CD4-positive, alpha-beta memory T cell (primary cell): ENCODE measurements at regions of chr2 and their contacts with region 1.

Region 1: GRCh38 chr2:218568190-218569037 is at the starts of genes CNOT9 and USP37:
- DNase-seq: peak; percentile 99 to 100 (median 100)
- H3K4me3 ChIP-seq: peak within 1 kb of the TSS; percentile 67 to 84
- H3K4me3 Mint-ChIP-seq: peak within 1 kb of the TSS; percentile 90 to 99 (median 97)
- H3K27ac ChIP-seq: peak within 1 kb of the TSS; percentile 99
- H3K27ac Mint-ChIP-seq: peak within 1 kb of the TSS; percentile 96 to 100 (median 100)
- H3K4me1 ChIP-seq: peaks cover 43% of the 10 kb centered on the region
- H3K4me1 Mint-ChIP-seq: peaks cover 48 to 78% (median 57%) of the 10 kb centered on the region in 4 donors
- H3K27me3 ChIP-seq: no peaks in the 10 kb centered on the region
- H3K27me3 Mint-ChIP-seq: no peaks in the 10 kb centered on the region
- total RNA-seq, gene CNOT9: 53.9 to 58.0 TPM
- total RNA-seq, gene USP37: 28.2 to 29.1 TPM

Region 2: GRCh38 chr2:218082586-218083351 is 485.6 kb before region 1 on chr2:
- CTCF ChIA-PET with region 1: no interaction called
- POLR2A ChIA-PET with region 1: no interaction called
- intact Hi-C with region 1: no loop called
- DNase-seq: no peak
- H3K4me3 ChIP-seq: no peak overlapping the region
- H3K4me3 Mint-ChIP-seq: no peak overlapping the region
- H3K27ac ChIP-seq: no peak overlapping the region
- H3K27ac Mint-ChIP-seq: no peak overlapping the region
- H3K4me1 ChIP-seq: no peaks in the 10 kb centered on the region
- H3K4me1 Mint-ChIP-seq: no peaks in the 10 kb centered on the region
- H3K27me3 ChIP-seq: no peaks in the 10 kb centered on the region
- H3K27me3 Mint-ChIP-seq: peaks cover 7 to 8% of the 10 kb centered on the region in 2 donors

Region 3: DNA sequence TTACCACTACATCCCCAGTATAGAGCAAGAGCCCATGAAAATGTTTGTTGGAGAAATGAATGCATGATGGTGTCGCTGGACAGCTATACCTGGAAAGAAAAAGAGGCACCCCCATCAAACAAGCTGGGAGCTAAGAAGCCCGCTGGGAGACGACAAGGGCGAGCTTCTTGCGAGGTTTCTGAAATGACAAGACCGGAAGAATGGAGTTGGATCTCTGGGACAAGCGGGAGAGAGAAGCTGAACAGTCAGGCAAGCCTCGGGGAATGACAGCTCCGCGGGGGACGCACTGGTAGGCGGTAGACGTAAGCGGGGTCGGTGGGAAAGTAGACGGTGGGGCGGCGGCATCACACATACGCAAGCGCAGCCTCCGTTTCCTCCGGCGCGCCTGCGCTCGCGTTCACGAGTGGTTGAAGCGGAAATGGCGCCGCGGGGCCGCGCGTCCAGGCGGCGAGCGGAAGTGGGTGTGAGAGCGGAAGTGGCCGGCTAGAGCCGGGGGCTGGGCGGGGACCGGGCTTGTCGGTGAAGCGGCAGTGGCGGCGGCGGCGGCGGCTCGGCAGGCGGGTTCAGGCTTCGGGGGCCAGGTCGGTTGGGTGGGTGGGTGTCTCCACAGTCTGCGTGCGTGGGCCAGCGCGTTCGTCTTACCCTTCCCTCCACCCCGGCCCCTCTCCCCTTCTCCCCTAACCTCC is 351.6 kb before region 1 on chr2 and contains the start of gene ARPC2:
- CTCF ChIA-PET with region 1: no interaction called
- POLR2A ChIA-PET with region 1: no interaction called
- intact Hi-C with region 1: loop called (anchors 2 kb)
- DNase-seq: peak; percentile 92 to 97 (median 96)
- H3K4me3 ChIP-seq: peak within 1 kb of the TSS; percentile 85 to 97
- H3K4me3 Mint-ChIP-seq: peak within 1 kb of the TSS; percentile 89 to 98 (median 96)
- H3K27ac ChIP-seq: peak within 1 kb of the TSS; percentile 93
- H3K27ac Mint-ChIP-seq: peak within 1 kb of the TSS; percentile 93 to 99 (median 97)
- H3K4me1 ChIP-seq: peaks cover 39% of the 10 kb centered on the region
- H3K4me1 Mint-ChIP-seq: peaks cover 28 to 52% (median 38%) of the 10 kb centered on the region in 4 donors
- H3K27me3 ChIP-seq: no peaks in the 10 kb centered on the region
- H3K27me3 Mint-ChIP-seq: no peaks in the 10 kb centered on the region
- total RNA-seq, gene ARPC2: 412 to 414 TPM

Region 4: GRCh38 chr2:218286570-218287459 is 281.6 kb before region 1 on chr2:
- CTCF ChIA-PET with region 1: no interaction called
- POLR2A ChIA-PET with region 1: no interaction called
- intact Hi-C with region 1: loop called (anchors 1 kb)
- DNase-seq: peak; percentile 84 to 97 (median 87)
- H3K4me3 ChIP-seq: peak overlapping the region; percentile 53 to 86
- H3K4me3 Mint-ChIP-seq: peak overlapping the region; percentile 90 to 97 (median 91)
- H3K27ac ChIP-seq: peak overlapping the region; percentile 94
- H3K27ac Mint-ChIP-seq: peak overlapping the region; percentile 98 to 100 (median 99)
- H3K4me1 ChIP-seq: peaks cover 92% of the 10 kb centered on the region
- H3K4me1 Mint-ChIP-seq: peaks cover 55 to 95% (median 73%) of the 10 kb centered on the region in 4 donors
- H3K27me3 ChIP-seq: no peaks in the 10 kb centered on the region
- H3K27me3 Mint-ChIP-seq: no peaks in the 10 kb centered on the region

Region 5: GRCh38 chr2:218648088-218648786 is 79.8 kb after region 1 on chr2:
- CTCF ChIA-PET with region 1: no interaction called
- POLR2A ChIA-PET with region 1: no interaction called
- intact Hi-C with region 1: loop called (anchors 2 kb)
- DNase-seq: peak in 4 of 5 donors; percentile 42 to 52 (median 48)
- H3K4me3 ChIP-seq: no peak overlapping the region
- H3K4me3 Mint-ChIP-seq: no peak overlapping the region
- H3K27ac ChIP-seq: no peak overlapping the region
- H3K27ac Mint-ChIP-seq: peak overlapping the region in 2 of 7 donors; percentile 54 to 67
- H3K4me1 ChIP-seq: peaks cover 6% of the 10 kb centered on the region
- H3K4me1 Mint-ChIP-seq: peaks cover 6 to 13% (median 11%) of the 10 kb centered on the region in 4 donors
- H3K27me3 ChIP-seq: no peaks in the 10 kb centered on the region
- H3K27me3 Mint-ChIP-seq: no peaks in the 10 kb centered on the region

Region 6: DNA sequence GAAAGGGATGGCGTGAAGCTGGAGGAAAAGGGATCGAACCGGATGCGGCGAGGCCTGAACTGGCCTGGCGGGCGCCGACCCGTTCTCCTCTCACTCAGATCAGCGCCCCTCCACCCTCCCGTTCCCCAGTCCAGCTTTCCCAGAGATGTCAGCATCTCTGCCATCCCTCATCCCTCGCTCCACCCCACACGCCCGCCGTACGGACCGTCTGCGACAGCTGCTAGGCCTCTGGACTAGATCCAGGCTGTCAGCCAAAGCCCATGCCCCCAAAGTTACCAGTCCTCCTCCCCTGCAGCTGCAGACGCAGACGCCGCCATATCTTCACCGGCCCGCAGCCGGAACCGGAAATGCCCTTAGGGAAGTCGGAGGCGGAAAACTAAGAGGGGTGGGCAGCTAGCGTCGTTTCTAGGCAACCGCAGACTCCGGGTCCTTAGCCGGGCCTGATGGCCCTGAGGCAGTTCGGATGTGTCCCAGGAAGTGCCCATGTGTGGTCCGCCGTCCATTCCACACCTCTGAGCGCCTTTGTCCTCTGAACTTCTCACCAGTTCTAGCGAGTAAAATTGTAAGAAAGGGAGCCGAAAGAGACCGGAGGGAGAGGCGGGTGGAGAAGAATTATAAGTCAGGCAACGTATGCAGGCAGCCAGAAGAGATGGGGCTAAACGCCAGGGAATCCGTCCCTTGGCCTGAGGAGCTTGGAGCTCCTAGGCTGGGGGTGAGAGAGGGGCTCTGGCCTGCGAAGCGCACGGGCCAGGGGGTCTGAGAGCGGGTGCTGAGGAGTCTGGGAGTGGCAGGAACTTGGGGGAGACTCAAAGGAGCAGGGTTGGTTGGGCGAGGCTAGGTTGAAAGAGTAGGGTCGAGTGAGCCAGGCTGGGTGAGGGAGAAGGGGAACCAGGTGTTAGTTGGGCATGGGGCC is 103.5 kb after region 1 on chr2 and contains the starts of genes RNF25 and STK36:
- CTCF ChIA-PET with region 1: interaction called, 3 read pairs
- POLR2A ChIA-PET with region 1: interaction called, 4 read pairs
- intact Hi-C with region 1: loop called (anchors 5 kb)
- DNase-seq: peak; percentile 78 to 88 (median 81)
- H3K4me3 ChIP-seq: peak within 1 kb of the TSS; percentile 77 to 97
- H3K4me3 Mint-ChIP-seq: peak within 1 kb of the TSS; percentile 95 to 98 (median 96)
- H3K27ac ChIP-seq: peak within 1 kb of the TSS; percentile 81
- H3K27ac Mint-ChIP-seq: peak within 1 kb of the TSS; percentile 89 to 98 (median 98)
- H3K4me1 ChIP-seq: peaks cover 18% of the 10 kb centered on the region
- H3K4me1 Mint-ChIP-seq: peaks cover 13 to 26% (median 19%) of the 10 kb centered on the region in 4 donors
- H3K27me3 ChIP-seq: no peaks in the 10 kb centered on the region
- H3K27me3 Mint-ChIP-seq: no peaks in the 10 kb centered on the region
- total RNA-seq, gene RNF25: 28.6 to 32.9 TPM
- total RNA-seq, gene STK36: 25.8 to 27.3 TPM

Region 7: GRCh38 chr2:218710687-218711549 is 142.5 kb after region 1 on chr2 and contains the start of gene TTLL4:
- CTCF ChIA-PET with region 1: interaction called, 3 read pairs
- POLR2A ChIA-PET with region 1: no interaction called
- intact Hi-C with region 1: loop called (anchors 1 kb)
- DNase-seq: peak; percentile 98 to 99 (median 99)
- H3K4me3 ChIP-seq: peak within 1 kb of the TSS; percentile 55 to 78
- H3K4me3 Mint-ChIP-seq: peak within 1 kb of the TSS; percentile 88 to 98 (median 95)
- H3K27ac ChIP-seq: peak within 1 kb of the TSS; percentile 81
- H3K27ac Mint-ChIP-seq: peak within 1 kb of the TSS; percentile 79 to 96 (median 93)
- H3K4me1 ChIP-seq: peaks cover 16% of the 10 kb centered on the region
- H3K4me1 Mint-ChIP-seq: peaks cover 14 to 26% (median 18%) of the 10 kb centered on the region in 4 donors
- H3K27me3 ChIP-seq: no peaks in the 10 kb centered on the region
- H3K27me3 Mint-ChIP-seq: peaks cover 0 to under 1% of the 10 kb centered on the region in 2 donors
- total RNA-seq, gene TTLL4: 23.1 to 26.1 TPM

Region 8: GRCh38 chr2:218892693-218893348 is 324.4 kb after region 1 on chr2:
- CTCF ChIA-PET with region 1: no interaction called
- POLR2A ChIA-PET with region 1: no interaction called
- intact Hi-C with region 1: loop called (anchors 10 kb)
- DNase-seq: peak; percentile 89 to 96 (median 92)
- H3K4me3 ChIP-seq: peak overlapping the region; percentile 9 to 61
- H3K4me3 Mint-ChIP-seq: peak overlapping the region; percentile 76 to 87 (median 80)
- H3K27ac ChIP-seq: peak overlapping the region; percentile 93
- H3K27ac Mint-ChIP-seq: peak overlapping the region; percentile 94 to 99 (median 98)
- H3K4me1 ChIP-seq: peaks cover 66% of the 10 kb centered on the region
- H3K4me1 Mint-ChIP-seq: peaks cover 40 to 76% (median 50%) of the 10 kb centered on the region in 4 donors
- H3K27me3 ChIP-seq: no peaks in the 10 kb centered on the region
- H3K27me3 Mint-ChIP-seq: no peaks in the 10 kb centered on the region